ENCODE measurements at regions of chr22 and their contacts with region 1.

Region 1: GRCh38 chr22:40250608-40251007 is 72.9 kb downstream of the TNRC6B start:
- DNase-seq: peak; percentile 73
- H3K4me3 Mint-ChIP-seq: no peak overlapping the region
- H3K27ac Mint-ChIP-seq: peak overlapping the region; percentile 82
- H3K4me1 Mint-ChIP-seq: peaks cover 79% of the 10 kb centered on the region
- H3K27me3 Mint-ChIP-seq: no peaks in the 10 kb centered on the region

Region 2: DNA sequence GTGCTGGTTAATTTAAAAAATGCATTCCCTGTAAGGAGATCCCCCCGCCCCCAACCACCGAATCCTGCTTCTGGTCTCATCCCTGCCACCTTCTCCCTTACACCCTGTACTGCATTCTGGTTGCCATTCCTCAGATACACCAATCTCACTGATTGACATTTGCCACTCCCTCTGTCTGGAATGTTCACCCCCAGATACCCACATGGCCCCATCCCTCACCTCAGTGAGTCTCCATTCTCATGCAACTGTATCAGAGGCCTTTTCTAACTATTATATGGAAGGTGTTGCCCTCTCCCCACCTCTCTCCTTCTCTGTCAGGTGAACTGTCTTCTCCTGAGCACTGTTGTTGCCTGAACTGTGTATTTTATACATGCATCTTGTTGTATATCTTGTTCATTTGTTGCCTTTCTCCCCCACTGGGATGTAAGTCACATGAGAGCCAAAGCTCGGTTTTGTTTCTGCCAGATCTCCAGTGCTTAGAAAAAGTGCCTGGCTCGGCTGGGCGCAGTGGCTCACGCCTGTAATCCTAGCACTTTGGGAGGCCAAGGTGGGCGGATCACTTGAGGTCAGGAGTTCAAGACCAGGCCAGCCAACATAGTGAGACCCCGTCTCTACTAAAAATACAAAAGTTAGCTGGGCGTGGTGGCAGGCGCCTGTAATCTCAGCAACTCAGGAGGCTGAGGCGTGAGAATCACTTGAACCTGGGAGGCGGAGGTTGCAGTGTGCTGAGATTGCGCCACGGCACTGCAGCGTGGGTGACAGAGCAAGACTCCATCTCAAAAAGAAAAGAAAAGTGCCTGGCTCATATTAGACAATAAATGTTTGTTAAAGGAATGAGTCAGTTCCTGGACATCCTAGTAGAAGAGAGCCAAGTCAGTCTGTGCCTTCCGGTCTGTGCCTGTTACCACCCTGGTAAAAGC is 11.9 kb before region 1 on chr22:
- CTCF ChIA-PET with region 1: no interaction called
- POLR2A ChIA-PET with region 1: interaction called, 4 read pairs
- intact Hi-C with region 1: loop called (anchors 1 kb)
- DNase-seq: peak; percentile 59
- H3K4me3 Mint-ChIP-seq: peak overlapping the region; percentile 2
- H3K27ac Mint-ChIP-seq: peak overlapping the region; percentile 59
- H3K4me1 Mint-ChIP-seq: peaks cover 81% of the 10 kb centered on the region
- H3K27me3 Mint-ChIP-seq: no peaks in the 10 kb centered on the region

Measured in activated CD4-positive, alpha-beta memory T cell treated with anti-CD3 and anti-CD28 coated beads for 36 hours (primary cell).